ENCODE measurements at regions of chr5 and their contacts with region 1.

Region 1: DNA sequence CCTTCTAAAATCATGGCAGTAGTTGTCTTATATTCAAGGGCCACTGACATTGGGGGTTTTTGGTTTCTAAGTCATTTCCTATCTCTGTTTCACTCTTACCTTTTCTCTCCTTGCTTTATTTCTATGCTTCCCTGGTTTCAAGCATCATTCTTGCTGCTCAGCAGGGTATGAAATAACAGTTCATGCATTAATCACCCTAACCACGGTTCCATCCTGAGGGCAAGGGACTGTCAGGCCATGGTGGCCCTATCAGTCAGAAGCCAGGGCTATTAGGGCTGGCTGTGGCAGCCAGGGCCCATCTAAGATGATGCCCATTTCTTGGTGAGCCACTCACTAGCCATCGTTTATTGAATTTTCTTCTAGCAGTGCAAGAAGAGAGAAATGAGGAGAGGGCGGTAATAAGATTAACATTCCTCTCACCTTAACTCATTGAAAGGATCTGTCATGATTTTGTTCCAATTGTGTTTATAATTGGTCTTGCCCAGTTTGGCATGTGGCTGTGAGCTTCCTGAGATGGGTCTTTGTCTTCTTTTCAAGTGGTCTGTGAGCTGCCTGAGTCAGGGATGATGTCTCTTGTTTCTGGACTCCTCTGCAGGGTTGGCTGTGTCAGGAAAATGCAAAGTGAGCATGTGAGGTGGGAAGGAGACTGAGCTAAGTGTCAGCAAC is 45.2 kb downstream of the CYSTM1 start:
- DNase-seq: no peak
- H3K4me3 ChIP-seq: no peak overlapping the region
- H3K27me3 ChIP-seq: no peaks in the 10 kb centered on the region
- CTCF ChIP-seq: no peak

Region 2: GRCh38 chr5:140054086-140054689 is 166.0 kb before region 1 on chr5:
- CTCF ChIA-PET with region 1: no interaction called
- POLR2A ChIA-PET with region 1: no interaction called
- DNase-seq: no peak
- H3K4me3 ChIP-seq: no peak overlapping the region
- H3K27me3 ChIP-seq: peaks cover 14% of the 10 kb centered on the region
- CTCF ChIP-seq: no peak

Region 3: GRCh38 chr5:140207250-140207964 is 12.8 kb before region 1 on chr5:
- CTCF ChIA-PET with region 1: interaction called, 11 read pairs
- POLR2A ChIA-PET with region 1: interaction called, 3 read pairs
- DNase-seq: no peak
- H3K4me3 ChIP-seq: no peak overlapping the region
- H3K27me3 ChIP-seq: no peaks in the 10 kb centered on the region
- CTCF ChIP-seq: no peak

Region 4: GRCh38 chr5:140232731-140233130 is 12.6 kb after region 1 on chr5:
- CTCF ChIA-PET with region 1: no interaction called
- POLR2A ChIA-PET with region 1: no interaction called
- DNase-seq: no peak
- H3K4me3 ChIP-seq: no peak overlapping the region
- H3K27me3 ChIP-seq: no peaks in the 10 kb centered on the region
- CTCF ChIP-seq: no peak

Region 5: DNA sequence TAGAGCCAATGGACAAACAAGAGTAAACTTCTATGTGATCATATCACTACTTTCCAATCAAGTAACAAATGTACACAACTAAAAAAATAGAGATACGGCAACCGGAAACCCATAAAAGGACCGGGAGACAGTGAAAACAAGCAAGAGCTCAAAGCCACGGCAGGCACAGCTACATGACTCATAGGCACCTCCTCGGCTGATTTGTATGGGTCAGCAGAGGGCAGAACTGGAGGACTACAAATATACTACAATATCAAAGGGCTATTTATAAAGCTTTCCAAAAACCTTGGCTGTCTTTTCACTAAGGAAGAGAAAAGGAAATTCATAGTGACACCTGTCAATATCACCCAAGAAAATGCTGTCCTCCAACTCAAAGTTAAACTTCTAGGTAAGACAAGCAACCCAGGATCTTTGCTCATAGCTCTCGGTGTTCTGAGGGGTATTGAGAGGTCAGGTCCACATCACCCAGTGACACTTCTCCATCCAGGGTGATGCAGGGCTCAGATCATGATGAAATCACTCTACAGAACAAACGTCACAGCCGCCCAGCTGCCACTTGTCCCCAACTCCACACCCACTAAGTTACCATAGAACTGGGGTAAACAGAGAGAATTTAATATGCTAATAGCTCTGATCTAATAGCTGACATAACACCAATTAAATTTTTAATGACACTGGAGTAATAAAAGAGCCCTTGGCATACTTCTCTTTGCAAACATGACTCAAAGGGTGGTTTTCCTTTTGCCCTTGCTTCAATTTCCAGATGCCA is 41.4 kb after region 1 on chr5:
- CTCF ChIA-PET with region 1: no interaction called
- POLR2A ChIA-PET with region 1: no interaction called
- DNase-seq: peak; percentile 52
- H3K4me3 ChIP-seq: no peak overlapping the region
- H3K27me3 ChIP-seq: no peaks in the 10 kb centered on the region
- CTCF ChIP-seq: peak; percentile 22; the same call in 1 of the 2 replicates

Region 6: DNA sequence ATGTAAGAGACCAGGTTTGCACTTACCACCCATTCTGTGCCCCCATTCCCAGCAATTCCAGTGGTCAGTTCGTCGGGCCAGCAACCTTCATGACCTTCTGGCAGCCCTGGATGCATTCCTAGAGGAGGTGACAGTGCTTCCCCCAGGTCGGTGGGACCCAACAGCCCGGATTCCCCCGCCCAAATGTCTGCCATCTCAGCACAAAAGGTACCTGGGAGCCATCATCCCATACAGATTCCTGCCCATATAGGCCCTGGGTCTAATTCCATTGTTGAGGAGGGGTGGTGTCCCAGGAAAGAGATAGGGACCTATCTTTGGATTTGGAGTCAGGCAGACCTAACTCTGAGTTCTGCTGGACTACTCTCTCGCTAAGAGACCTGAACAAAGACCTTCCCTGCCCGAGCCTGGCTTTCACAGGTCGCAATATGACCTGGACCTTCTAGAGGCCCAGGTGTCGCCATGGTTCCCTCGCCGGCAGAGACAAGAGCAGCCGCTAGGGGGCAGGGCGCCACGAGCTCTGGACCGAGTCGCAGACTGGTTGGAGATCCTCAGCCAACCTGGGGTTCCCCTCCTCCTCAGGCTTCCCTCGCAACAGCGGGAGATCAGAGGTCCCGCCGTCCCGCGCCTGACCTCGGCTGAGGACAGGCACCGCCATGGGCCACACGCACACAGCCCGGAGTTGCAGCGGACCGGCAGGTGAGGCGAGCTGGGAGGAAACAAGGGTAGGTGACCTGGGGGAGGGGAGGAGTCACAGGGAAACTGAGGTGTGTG is 142.9 kb after region 1 on chr5:
- CTCF ChIA-PET with region 1: no interaction called
- POLR2A ChIA-PET with region 1: no interaction called
- DNase-seq: no peak
- H3K4me3 ChIP-seq: peak overlapping the region; percentile 29
- H3K27me3 ChIP-seq: no peaks in the 10 kb centered on the region
- CTCF ChIP-seq: peak; percentile 94